ENCODE measurements at regions of chr14 and their contacts with region 1.

Region 1: GRCh38 chr14:61719344-61720293 is 24.3 kb downstream of the HIF1A start:
- DNase-seq: peak; percentile 46
- ATAC-seq: peak; percentile 37
- H3K4me3 ChIP-seq: peak overlapping the region in 4 of 5 experiments; percentile 5 to 41 (median 24)
- H3K4me3 Mint-ChIP-seq: peak overlapping the region; percentile 82
- H3K27ac ChIP-seq: peak overlapping the region; percentile 78 to 88
- H3K27ac Mint-ChIP-seq: peak overlapping the region; percentile 80
- H3K4me1 ChIP-seq: peaks cover 44 to 59% of the 10 kb centered on the region in 2 donors
- H3K4me1 Mint-ChIP-seq: peaks cover 74% of the 10 kb centered on the region
- H3K27me3 ChIP-seq: no peaks in the 10 kb centered on the region
- H3K27me3 Mint-ChIP-seq: no peaks in the 10 kb centered on the region
- CTCF ChIP-seq: no peak

Region 2: DNA sequence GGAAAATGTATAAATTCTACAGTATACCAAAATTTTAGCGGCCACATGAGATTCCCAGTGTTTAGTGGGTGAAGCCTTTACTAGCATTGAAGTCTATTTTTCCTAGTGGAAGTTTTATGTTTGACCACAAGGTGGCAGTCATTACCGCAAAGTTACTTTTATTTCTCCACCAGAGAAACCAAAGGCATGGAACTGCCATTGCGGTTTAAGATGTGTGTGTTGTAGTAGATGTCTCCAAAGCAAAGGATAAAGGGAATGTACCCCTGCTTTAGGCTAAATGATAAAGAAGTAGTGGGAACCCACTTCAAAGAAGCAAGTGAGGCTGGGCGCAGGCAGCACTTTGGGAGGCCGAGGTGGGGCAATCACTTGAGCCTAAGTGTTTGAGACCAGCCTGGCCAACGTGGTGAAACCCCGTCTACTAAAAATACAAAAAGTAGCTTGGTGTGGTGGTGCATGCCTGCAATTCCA is 257.8 kb before region 1 on chr14:
- CTCF ChIA-PET with region 1: interaction called, 16 read pairs
- POLR2A ChIA-PET with region 1: no interaction called
- intact Hi-C with region 1: no loop called
- DNase-seq: peak; percentile 80
- ATAC-seq: peak; percentile 70
- H3K4me3 ChIP-seq: no peak overlapping the region
- H3K4me3 Mint-ChIP-seq: peak overlapping the region; percentile 21
- H3K27ac ChIP-seq: no peak overlapping the region
- H3K27ac Mint-ChIP-seq: peak overlapping the region; percentile 74
- H3K4me1 ChIP-seq: peaks cover 8 to 18% of the 10 kb centered on the region in 2 donors
- H3K4me1 Mint-ChIP-seq: peaks cover 30% of the 10 kb centered on the region
- H3K27me3 ChIP-seq: no peaks in the 10 kb centered on the region
- H3K27me3 Mint-ChIP-seq: no peaks in the 10 kb centered on the region
- CTCF ChIP-seq: peak; percentile 94

Region 3: GRCh38 chr14:61703342-61704129 is 16.1 kb before region 1 on chr14:
- CTCF ChIA-PET with region 1: interaction called, 11 read pairs
- POLR2A ChIA-PET with region 1: interaction called, 5 read pairs
- intact Hi-C with region 1: loop called (anchors 2 kb)
- DNase-seq: peak; percentile 5
- ATAC-seq: peak; percentile 14
- H3K4me3 ChIP-seq: no peak overlapping the region
- H3K4me3 Mint-ChIP-seq: peak overlapping the region; percentile 51
- H3K27ac ChIP-seq: peak overlapping the region in 1 of 2 donors; percentile 59
- H3K27ac Mint-ChIP-seq: peak overlapping the region; percentile 22
- H3K4me1 ChIP-seq: peaks cover 27 to 67% of the 10 kb centered on the region in 2 donors
- H3K4me1 Mint-ChIP-seq: peaks cover 78% of the 10 kb centered on the region
- H3K27me3 ChIP-seq: no peaks in the 10 kb centered on the region
- H3K27me3 Mint-ChIP-seq: no peaks in the 10 kb centered on the region
- CTCF ChIP-seq: no peak

Region 4: DNA sequence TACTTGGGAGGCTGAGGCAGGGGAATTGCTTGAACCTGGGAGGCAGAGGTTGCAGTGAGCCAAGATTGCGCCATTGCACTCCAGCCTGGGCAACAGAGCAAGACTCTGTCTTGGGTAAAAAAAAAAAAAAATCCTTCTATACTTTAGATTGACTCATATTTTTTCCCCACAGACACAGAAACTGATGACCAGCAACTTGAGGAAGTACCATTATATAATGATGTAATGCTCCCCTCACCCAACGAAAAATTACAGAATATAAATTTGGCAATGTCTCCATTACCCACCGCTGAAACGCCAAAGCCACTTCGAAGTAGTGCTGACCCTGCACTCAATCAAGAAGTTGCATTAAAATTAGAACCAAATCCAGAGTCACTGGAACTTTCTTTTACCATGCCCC is 18.3 kb after region 1 on chr14:
- CTCF ChIA-PET with region 1: no interaction called
- POLR2A ChIA-PET with region 1: no interaction called
- intact Hi-C with region 1: loop called (anchors 2 kb)
- DNase-seq: no peak
- ATAC-seq: no peak
- H3K4me3 ChIP-seq: no peak overlapping the region
- H3K4me3 Mint-ChIP-seq: no peak overlapping the region
- H3K27ac ChIP-seq: peak overlapping the region in 1 of 2 donors; percentile 30
- H3K27ac Mint-ChIP-seq: no peak overlapping the region
- H3K4me1 ChIP-seq: peaks cover 0 to 3% of the 10 kb centered on the region in 2 donors
- H3K4me1 Mint-ChIP-seq: peaks cover 15% of the 10 kb centered on the region
- H3K27me3 ChIP-seq: no peaks in the 10 kb centered on the region
- H3K27me3 Mint-ChIP-seq: no peaks in the 10 kb centered on the region
- CTCF ChIP-seq: no peak

Measured in B cell (primary cell).